ENCODE measurements at regions of chr2 and their contacts with region 1.

Region 1: DNA sequence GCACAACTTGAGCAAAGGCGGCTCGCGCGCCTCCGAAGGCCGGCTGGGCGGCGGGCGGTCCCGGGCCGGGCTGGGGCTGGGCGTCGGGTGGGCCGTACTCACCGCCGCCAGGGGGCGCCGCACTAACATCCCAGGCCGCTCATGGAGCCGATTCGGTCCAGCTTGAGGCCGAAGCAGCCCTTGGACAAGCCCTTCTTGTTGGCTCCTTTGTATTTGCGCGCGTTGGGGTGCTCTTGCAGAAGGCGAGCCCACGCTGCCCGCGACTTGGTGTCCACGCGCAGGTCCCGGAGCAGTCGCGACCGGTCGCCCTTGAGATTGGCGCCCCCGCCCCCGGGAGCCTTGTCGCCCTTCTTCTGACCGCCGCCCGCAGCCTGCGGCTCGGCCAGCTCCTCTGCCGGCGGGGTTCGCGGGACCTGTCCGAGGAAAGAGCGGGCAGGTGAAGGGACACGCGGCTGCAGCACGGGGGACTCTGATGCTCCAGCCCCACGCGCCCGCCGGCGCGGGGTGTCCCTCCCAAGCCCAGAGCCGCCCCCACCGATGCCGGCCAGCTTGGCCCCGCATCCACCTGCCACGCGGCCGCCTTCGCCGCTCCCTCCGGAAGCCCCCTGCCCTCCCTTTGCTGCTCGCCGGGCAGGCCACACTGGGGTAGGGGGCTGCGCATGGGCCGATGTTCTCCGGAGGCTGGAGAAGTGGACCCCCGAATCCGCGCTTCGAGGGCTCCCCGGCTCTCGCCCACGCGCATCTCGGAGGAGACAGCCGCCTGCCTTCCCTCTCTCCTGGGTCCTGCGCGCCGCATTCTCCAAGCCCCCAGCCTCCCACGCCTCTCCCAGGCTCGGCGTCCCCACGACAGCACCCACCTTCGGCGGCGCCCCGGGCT is 655 bp downstream of the NPPC start:
- DNase-seq: peak; percentile 84 to 89 (median 86)
- ATAC-seq: peak; percentile 86
- H3K4me3 ChIP-seq: peak overlapping the region; percentile 6 to 25
- H3K27ac ChIP-seq: no peak overlapping the region
- H3K4me1 ChIP-seq: peaks cover 26% of the 10 kb centered on the region
- H3K27me3 ChIP-seq: peaks cover 0 to 25% of the 10 kb centered on the region in 2 donors
- CTCF ChIP-seq: peak; percentile 59 to 96 (median 94)
- POLR2A ChIP-seq: no peak

Region 2: DNA sequence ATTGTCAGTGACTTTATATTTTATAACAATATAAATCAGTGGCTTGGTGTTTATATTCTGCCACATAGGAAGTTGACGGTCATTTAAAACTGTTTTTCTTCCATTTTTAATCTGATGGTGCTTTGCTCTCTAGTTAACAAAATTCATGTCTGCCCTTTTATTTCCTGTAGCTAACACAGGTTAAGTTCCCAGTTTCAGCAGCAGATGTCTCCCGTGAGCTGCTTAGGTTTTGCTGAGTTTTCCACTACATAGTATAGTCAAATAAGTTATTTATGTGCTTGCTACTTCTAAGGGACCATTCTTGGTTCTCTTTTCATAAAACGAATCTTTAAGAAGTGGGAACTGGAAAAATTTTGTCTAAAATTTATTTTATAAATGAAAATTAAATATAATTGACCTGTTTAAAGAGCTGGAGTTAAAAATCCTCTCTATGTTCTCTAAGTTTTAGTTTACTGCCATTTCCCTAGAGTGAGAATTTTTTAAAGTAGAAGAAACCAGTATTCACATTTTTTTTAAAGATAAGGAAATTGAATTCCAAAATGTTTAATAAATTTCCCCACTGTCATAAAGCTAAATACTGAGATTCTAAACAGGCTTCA is 821.3 kb before region 1 on chr2:
- intact Hi-C with region 1: no loop called
- DNase-seq: peak; percentile 43 to 66 (median 60)
- ATAC-seq: peak; percentile 72
- H3K4me3 ChIP-seq: no peak overlapping the region
- H3K27ac ChIP-seq: no peak overlapping the region
- H3K4me1 ChIP-seq: no peaks in the 10 kb centered on the region
- H3K27me3 ChIP-seq: no peaks in the 10 kb centered on the region
- CTCF ChIP-seq: peak; percentile 37 to 80 (median 77)
- POLR2A ChIP-seq: no peak

Region 3: DNA sequence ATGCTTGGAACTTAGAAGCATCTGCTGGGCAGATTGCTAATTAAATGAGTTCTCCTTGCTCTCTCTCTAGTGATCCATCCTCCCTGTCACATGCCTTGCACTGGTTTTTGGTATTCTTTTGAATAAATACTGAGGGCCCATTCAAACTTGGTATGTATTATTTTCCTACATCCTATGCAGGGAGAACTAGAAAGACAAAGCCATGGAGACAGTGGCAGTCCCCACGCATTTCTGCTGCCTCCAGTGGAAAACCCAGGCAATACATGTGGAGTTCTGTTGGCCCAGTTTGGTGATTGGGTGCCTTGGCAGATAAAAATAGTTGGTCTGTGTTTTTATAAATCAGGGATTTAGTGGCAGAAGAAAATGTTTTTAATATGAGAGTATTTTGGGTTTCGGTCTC is 104.7 kb after region 1 on chr2:
- intact Hi-C with region 1: no loop called
- DNase-seq: no peak
- ATAC-seq: no peak
- H3K4me3 ChIP-seq: no peak overlapping the region
- H3K27ac ChIP-seq: no peak overlapping the region
- H3K4me1 ChIP-seq: no peaks in the 10 kb centered on the region
- H3K27me3 ChIP-seq: no peaks in the 10 kb centered on the region
- CTCF ChIP-seq: peak in 1 of 7 experiments; percentile 6
- POLR2A ChIP-seq: no peak

Region 4: DNA sequence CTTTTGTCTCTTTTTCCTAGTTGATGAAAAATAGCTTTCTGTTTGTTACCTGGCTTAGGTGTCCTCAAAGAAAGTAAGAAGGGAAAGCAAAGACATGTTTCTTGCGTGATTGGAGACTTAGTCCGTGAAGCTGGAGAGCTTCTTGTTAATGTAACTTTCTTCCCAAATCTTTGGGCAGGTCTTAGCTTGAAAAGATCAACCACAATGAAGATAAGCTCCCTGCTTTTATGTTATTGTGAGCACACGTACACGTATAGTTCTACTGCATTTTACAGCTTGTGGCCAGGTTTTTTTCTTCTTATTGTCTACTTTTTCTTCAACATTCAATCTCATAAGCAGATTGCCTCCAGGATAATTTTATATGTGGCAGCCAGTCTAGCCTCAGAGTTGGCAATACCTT is 135.7 kb after region 1 on chr2:
- intact Hi-C with region 1: no loop called
- DNase-seq: no peak
- ATAC-seq: no peak
- H3K4me3 ChIP-seq: no peak overlapping the region
- H3K27ac ChIP-seq: no peak overlapping the region
- H3K4me1 ChIP-seq: no peaks in the 10 kb centered on the region
- H3K27me3 ChIP-seq: no peaks in the 10 kb centered on the region
- CTCF ChIP-seq: no peak
- POLR2A ChIP-seq: no peak

Region 5: DNA sequence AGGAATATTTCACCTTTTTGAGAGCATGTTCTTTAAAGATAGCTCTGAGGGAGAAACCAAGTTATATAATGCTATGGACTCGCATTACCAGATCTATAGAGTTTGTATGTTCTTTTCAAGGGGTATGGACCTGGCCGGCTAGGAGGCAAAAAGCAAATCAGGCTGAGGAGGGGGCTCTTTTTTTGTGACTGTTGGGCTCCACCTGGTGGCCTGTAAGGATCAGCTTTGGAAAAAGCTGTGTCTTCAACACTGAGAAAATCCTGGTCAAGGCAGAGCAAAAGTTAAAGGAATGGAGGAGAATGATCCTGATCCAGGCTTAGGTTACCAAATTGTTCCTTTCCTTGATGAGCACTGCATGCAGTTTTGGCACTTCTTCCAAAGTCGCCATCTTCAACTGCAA is 216.5 kb after region 1 on chr2:
- intact Hi-C with region 1: loop called (anchors 5 kb)
- DNase-seq: peak; percentile 30 to 61 (median 40)
- ATAC-seq: no peak
- H3K4me3 ChIP-seq: no peak overlapping the region
- H3K27ac ChIP-seq: no peak overlapping the region
- H3K4me1 ChIP-seq: peaks cover 18% of the 10 kb centered on the region
- H3K27me3 ChIP-seq: no peaks in the 10 kb centered on the region
- CTCF ChIP-seq: peak; percentile 32 to 78 (median 64)
- POLR2A ChIP-seq: no peak

Region 6: GRCh38 chr2:232327105-232328041 is 401.8 kb after region 1 on chr2:
- intact Hi-C with region 1: loop called (anchors 5 kb)
- DNase-seq: peak; percentile 57 to 69 (median 66)
- ATAC-seq: peak; percentile 54
- H3K4me3 ChIP-seq: no peak overlapping the region
- H3K27ac ChIP-seq: no peak overlapping the region
- H3K4me1 ChIP-seq: no peaks in the 10 kb centered on the region
- H3K27me3 ChIP-seq: no peaks in the 10 kb centered on the region
- CTCF ChIP-seq: peak; percentile 52 to 85 (median 63)
- POLR2A ChIP-seq: no peak

Region 7: DNA sequence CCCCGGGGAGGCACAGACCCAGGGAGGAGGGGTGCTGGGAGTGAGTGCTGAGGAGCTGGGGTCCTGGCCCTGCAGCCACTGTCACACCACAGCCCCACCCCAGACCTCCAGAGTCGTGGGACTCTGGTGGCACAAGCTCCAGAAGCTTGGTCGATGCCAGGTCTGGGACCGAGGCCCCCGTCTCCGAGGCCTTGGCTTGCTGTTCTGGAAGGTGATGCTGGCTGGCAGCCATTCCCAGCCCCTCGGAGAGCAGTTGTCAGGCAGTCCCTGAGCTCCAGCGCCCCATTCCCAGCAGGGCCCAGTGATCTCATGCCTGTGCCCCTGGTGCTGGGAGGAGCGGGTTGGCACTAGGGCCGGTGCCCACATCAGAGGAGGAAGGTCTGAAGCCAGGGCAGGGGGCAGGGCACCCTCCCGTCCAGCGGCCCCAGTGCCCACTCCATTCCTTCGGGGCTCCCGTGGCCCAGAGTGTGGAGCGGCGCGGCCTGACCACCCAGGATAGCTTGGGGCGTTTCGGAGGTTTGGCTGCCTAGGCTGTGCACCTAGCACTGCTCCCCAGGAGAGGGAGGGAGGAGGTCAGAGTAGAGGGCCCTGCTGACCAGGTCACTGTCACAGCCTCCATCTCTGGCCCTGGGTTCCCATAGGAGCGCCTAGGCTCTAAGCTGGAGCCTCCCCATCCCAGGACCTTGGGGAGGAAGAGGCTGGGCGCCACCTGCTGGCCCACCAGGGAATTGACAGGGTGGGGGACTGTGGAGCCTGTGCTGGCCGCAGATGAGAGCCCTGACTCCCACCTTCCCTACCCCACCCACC is 513.6 kb after region 1 on chr2:
- intact Hi-C with region 1: loop called (anchors 10 kb)
- DNase-seq: peak in 3 of 4 donors; percentile 34 to 52 (median 44)
- ATAC-seq: peak; percentile 67
- H3K4me3 ChIP-seq: no peak overlapping the region
- H3K27ac ChIP-seq: no peak overlapping the region
- H3K4me1 ChIP-seq: peaks cover 12% of the 10 kb centered on the region
- H3K27me3 ChIP-seq: no peaks in the 10 kb centered on the region
- CTCF ChIP-seq: peak in 5 of 7 experiments; percentile 30 to 55 (median 43)
- POLR2A ChIP-seq: no peak

Measured in body of pancreas (tissue), 4 donors.